ENCODE measurements at regions of chr1 and their contacts with region 1.

Region 1: DNA sequence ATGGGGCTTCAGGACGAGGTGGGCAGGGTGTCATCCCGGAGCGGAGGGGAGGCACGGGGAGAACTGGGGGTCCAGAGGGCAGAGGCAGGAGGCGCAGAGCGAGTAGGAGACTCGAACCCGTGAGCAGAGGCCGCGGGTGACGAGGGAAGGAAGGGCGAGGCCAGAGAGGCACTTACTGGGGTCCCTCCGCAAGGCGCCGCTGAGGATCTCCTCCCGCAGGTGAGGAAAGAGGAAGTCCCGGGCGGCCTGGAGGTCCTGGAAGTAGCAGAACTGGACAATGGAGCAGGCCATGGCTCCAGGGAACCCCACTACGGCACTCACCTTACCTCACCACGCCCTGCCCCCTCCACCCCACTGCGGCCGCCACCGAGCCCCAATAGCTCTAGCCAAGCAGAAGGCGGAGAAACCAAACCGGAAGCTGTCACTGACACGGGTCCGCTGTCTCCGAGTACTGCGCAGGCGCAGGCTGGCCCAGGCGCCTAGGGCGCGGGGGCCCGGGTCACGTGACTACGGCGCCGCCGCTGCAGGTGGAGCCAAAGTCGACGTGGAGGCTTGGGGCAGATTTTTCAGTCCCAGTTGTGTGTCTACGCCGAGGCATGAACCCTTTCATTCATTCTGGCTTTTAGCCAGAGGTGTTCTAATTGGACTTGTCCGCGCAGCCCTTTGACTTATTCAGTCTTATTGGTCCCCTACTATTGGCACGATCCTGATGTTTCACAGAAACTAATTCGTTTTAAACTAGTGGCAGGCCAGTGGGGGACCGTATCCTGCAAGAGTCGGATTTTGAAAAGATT is at the start of gene RAB3GAP2:
- DNase-seq: peak; percentile 96
- ATAC-seq: peak; percentile 87
- H3K4me3 ChIP-seq: peak within 1 kb of the TSS; percentile 97
- H3K27ac ChIP-seq: peak within 1 kb of the TSS; percentile 42
- H3K4me1 ChIP-seq: peaks cover 21% of the 10 kb centered on the region
- H3K27me3 ChIP-seq: 0 out of 2 replicates have a peak, but pooled peaks cover under 1% of the 10 kb centered on the region
- CTCF ChIP-seq: no peak
- total RNA-seq, gene RAB3GAP2: 16.7 and 19.9 TPM in 2 replicates

Region 2: DNA sequence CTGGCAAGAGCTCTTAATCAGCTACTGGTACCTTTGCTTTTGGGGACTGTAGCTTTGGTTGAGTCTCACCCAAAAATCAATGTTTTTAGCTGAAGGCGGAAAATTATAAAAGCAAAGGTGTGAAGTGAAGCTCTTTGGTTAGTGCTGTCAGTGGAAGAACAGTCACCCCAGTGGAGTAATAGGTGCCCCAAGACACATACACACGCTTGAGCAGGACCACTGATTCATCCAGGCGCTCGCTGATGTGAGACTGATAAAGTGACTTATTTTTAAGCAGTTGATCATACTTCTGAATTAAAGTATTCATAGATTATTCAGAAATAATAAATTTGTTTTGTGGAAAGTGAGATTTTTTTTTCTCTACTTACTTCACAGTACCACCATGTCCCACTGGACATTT is 1890.0 kb before region 1 on chr1:
- CTCF ChIA-PET with region 1: no interaction called
- POLR2A ChIA-PET with region 1: interaction called, 10 read pairs
- intact Hi-C with region 1: no loop called
- DNase-seq: no peak
- ATAC-seq: no peak
- H3K4me3 ChIP-seq: no peak overlapping the region
- H3K27ac ChIP-seq: peak overlapping the region; percentile 91
- H3K4me1 ChIP-seq: peaks cover 75% of the 10 kb centered on the region
- H3K27me3 ChIP-seq: no peaks in the 10 kb centered on the region
- CTCF ChIP-seq: no peak

Region 3: GRCh38 chr1:219945795-219946194 is 326.4 kb before region 1 on chr1:
- CTCF ChIA-PET with region 1: no interaction called
- POLR2A ChIA-PET with region 1: no interaction called
- intact Hi-C with region 1: no loop called
- DNase-seq: no peak
- ATAC-seq: no peak
- H3K4me3 ChIP-seq: no peak overlapping the region
- H3K27ac ChIP-seq: no peak overlapping the region
- H3K4me1 ChIP-seq: no peaks in the 10 kb centered on the region
- H3K27me3 ChIP-seq: peaks cover 36% of the 10 kb centered on the region
- CTCF ChIP-seq: no peak

Region 4: GRCh38 chr1:220226752-220227151 is 45.5 kb before region 1 on chr1:
- CTCF ChIA-PET with region 1: no interaction called
- POLR2A ChIA-PET with region 1: interaction called, 14 read pairs
- intact Hi-C with region 1: no loop called
- DNase-seq: no peak
- ATAC-seq: no peak
- H3K4me3 ChIP-seq: no peak overlapping the region
- H3K27ac ChIP-seq: no peak overlapping the region
- H3K4me1 ChIP-seq: no peaks in the 10 kb centered on the region
- H3K27me3 ChIP-seq: no peaks in the 10 kb centered on the region
- CTCF ChIP-seq: no peak

Region 5: GRCh38 chr1:220235462-220235861 is 36.8 kb before region 1 on chr1:
- CTCF ChIA-PET with region 1: interaction called, 9 read pairs
- POLR2A ChIA-PET with region 1: interaction called, 5 read pairs
- intact Hi-C with region 1: loop called (anchors 2 kb)
- DNase-seq: peak; percentile 92
- ATAC-seq: peak; percentile 98
- H3K4me3 ChIP-seq: no peak overlapping the region; the same call in 1 of the 2 replicates
- H3K27ac ChIP-seq: peak overlapping the region; percentile 81
- H3K4me1 ChIP-seq: peaks cover 29% of the 10 kb centered on the region
- H3K27me3 ChIP-seq: no peaks in the 10 kb centered on the region
- CTCF ChIP-seq: no peak

Region 6: GRCh38 chr1:220748089-220748934 is 476.1 kb after region 1 on chr1 and contains the start of gene MTARC2:
- CTCF ChIA-PET with region 1: no interaction called
- POLR2A ChIA-PET with region 1: no interaction called
- intact Hi-C with region 1: loop called (anchors 5 kb)
- DNase-seq: peak; percentile 85
- ATAC-seq: peak; percentile 93
- H3K4me3 ChIP-seq: peak within 1 kb of the TSS; percentile 88
- H3K27ac ChIP-seq: peak within 1 kb of the TSS; percentile 17
- H3K4me1 ChIP-seq: peaks cover 34% of the 10 kb centered on the region
- H3K27me3 ChIP-seq: no peaks in the 10 kb centered on the region
- CTCF ChIP-seq: no peak
- total RNA-seq, gene MTARC2: 13.3 and 17.7 TPM in 2 replicates